Posterior cingulate gyrus (tissue), 11 donors: ENCODE measurements at regions of chr6 and their contacts with region 1.

Region 1: GRCh38 chr6:134097114-134097707 is 44.8 kb upstream of the SLC2A12 start:
- DNase-seq: peak in 6 of 10 donors; percentile 57 to 87 (median 72)

Region 2: GRCh38 chr6:133568970-133569889 is 528.0 kb before region 1 on chr6:
- intact Hi-C with region 1: loop called (anchors 1 kb)
- DNase-seq: peak in 1 of 10 donors; percentile 73

Region 3: GRCh38 chr6:133587546-133588160 is 509.6 kb before region 1 on chr6:
- intact Hi-C with region 1: no loop called
- DNase-seq: no peak

Region 4: GRCh38 chr6:133923938-133924593 is 173.1 kb before region 1 on chr6:
- intact Hi-C with region 1: loop called (anchors 1 kb)
- DNase-seq: peak in 6 of 10 donors; percentile 34 to 85 (median 72)

Region 5: GRCh38 chr6:133973109-133973971 is 123.9 kb before region 1 on chr6:
- intact Hi-C with region 1: loop called (anchors 5 kb)
- DNase-seq: no peak

Region 6: GRCh38 chr6:134063966-134064445 is 33.2 kb before region 1 on chr6:
- intact Hi-C with region 1: loop called (anchors 1 kb)
- DNase-seq: peak in 9 of 10 donors; percentile 36 to 94 (median 71)